Breast epithelium (tissue), 4 donors: ENCODE measurements at regions of chr19 and their contacts with region 1.

Region 1: GRCh38 chr19:14107581-14108461 is 9.7 kb downstream of the PRKACA start:
- DNase-seq: no peak
- H3K4me3 ChIP-seq: no peak overlapping the region
- H3K27ac ChIP-seq: peak overlapping the region; percentile 54 to 55
- H3K4me1 ChIP-seq: peaks cover 0 to 8% of the 10 kb centered on the region in 2 donors
- H3K27me3 ChIP-seq: no peaks in the 10 kb centered on the region
- CTCF ChIP-seq: no peak
- POLR2A ChIP-seq: no peak

Region 2: DNA sequence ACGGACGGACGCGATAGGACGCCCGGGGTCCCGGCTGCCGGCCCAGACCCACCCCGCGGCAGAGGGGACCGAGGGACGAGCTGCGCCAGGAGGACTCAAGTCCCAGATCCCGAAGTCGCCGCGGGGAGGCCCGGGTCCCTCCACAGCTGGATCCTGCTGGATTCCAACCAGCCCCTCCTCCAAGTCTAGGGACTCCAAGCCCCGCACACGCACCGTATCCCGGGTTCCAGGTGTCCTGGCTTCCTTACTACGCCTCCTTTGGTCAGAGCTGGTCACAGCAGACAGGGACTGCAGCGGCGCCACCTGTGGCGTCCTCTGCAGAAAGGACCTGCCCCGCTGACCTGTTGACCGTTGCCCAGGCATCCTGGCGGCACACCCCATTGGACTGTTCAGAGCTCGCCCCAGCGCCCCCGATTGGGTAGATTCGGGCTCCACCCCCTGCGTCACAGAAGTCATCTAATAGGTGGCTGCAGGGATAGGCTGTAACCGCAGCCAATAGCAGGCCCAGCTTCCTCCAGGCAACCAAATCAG is 1594.2 kb before region 1 on chr19:
- intact Hi-C with region 1: no loop called
- DNase-seq: no peak
- H3K4me3 ChIP-seq: peak overlapping the region in 1 of 3 donors; percentile 15
- H3K27ac ChIP-seq: no peak overlapping the region
- H3K4me1 ChIP-seq: no peaks in the 10 kb centered on the region
- H3K27me3 ChIP-seq: no peaks in the 10 kb centered on the region
- CTCF ChIP-seq: no peak
- POLR2A ChIP-seq: no peak

Region 3: DNA sequence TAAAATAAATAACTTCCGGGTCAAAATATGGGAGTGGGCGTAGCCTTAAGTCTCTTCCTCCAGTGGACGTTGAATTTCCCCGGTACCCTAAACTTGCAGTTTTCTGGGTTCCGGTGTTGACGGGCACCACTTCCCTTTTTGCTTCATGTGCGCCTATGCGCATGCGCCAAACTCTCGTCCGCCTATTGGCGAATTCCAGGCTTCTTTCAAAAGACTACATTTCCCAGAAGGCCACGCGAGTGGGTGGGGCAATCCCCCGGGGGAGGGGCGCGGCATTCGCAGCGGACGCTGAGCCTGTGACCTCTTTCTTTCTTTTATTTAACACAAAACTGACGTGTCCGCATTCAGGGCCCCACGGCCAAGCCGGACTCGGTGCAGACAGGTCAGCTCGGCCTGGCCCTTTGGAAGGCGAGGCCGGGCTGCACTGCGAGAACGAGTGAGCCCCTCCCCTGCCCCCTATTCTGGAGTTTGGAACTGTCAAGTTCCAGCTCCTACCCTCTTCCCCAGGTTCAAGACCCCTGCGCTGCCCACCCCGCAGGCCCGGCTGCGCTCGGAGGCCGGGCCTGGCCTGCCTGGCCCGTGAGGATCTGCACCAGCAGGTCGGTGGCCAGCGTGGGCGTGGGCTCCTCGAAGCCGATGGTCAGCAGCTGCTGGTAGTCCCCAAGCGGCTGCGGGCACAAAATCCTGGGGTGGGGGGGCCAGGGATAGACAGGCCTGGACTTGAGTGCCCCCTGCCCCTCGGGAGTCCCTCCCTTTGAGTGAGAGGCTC is 26.3 kb before region 1 on chr19:
- intact Hi-C with region 1: loop called (anchors 1 kb)
- DNase-seq: peak; percentile 99
- H3K4me3 ChIP-seq: peak overlapping the region; percentile 77 to 80 (median 78)
- H3K27ac ChIP-seq: peak overlapping the region; percentile 94 to 96
- H3K4me1 ChIP-seq: no peaks in the 10 kb centered on the region
- H3K27me3 ChIP-seq: no peaks in the 10 kb centered on the region
- CTCF ChIP-seq: peak in 1 of 3 donors; percentile 20
- POLR2A ChIP-seq: peak; percentile 70

Region 4: GRCh38 chr19:14237014-14237941 is 129.5 kb after region 1 on chr19:
- intact Hi-C with region 1: no loop called
- DNase-seq: no peak
- H3K4me3 ChIP-seq: no peak overlapping the region
- H3K27ac ChIP-seq: no peak overlapping the region
- H3K4me1 ChIP-seq: no peaks in the 10 kb centered on the region
- H3K27me3 ChIP-seq: no peaks in the 10 kb centered on the region
- CTCF ChIP-seq: no peak
- POLR2A ChIP-seq: no peak